ENCODE measurements at regions of chr2 and their contacts with region 1.

Region 1: GRCh38 chr2:223860809-223861738 is 23.7 kb upstream of the AP1S3 start:
- DNase-seq: peak; percentile 82
- ATAC-seq: peak; percentile 86
- H3K4me3 ChIP-seq: peak overlapping the region in 1 of 2 experiments; percentile 42; a peak in 2 of 4 replicates
- H3K27ac ChIP-seq: peak overlapping the region; percentile 92
- H3K4me1 ChIP-seq: peaks cover 50 to 62% of the 10 kb centered on the region in 2 experiments
- H3K27me3 ChIP-seq: no peaks in the 10 kb centered on the region
- CTCF ChIP-seq: peak; percentile 13 to 25 (median 14); a peak in 3 of 6 replicates
- POLR2A ChIP-seq: no peak
- RAD21 ChIP-seq: peak; percentile 41

Region 2: GRCh38 chr2:222976521-222977076 is 884.5 kb before region 1 on chr2:
- CTCF ChIA-PET with region 1: interaction called, 3 read pairs
- POLR2A ChIA-PET with region 1: no interaction called
- RAD21 ChIA-PET with region 1: no interaction called
- intact Hi-C with region 1: loop called (anchors 5 kb)
- DNase-seq: no peak
- ATAC-seq: no peak
- H3K4me3 ChIP-seq: no peak overlapping the region
- H3K27ac ChIP-seq: no peak overlapping the region
- H3K4me1 ChIP-seq: peaks cover 6 to 21% of the 10 kb centered on the region in 2 experiments; a peak in 2 of 4 replicates
- H3K27me3 ChIP-seq: no peaks in the 10 kb centered on the region
- CTCF ChIP-seq: no peak
- POLR2A ChIP-seq: no peak
- RAD21 ChIP-seq: no peak

Region 3: DNA sequence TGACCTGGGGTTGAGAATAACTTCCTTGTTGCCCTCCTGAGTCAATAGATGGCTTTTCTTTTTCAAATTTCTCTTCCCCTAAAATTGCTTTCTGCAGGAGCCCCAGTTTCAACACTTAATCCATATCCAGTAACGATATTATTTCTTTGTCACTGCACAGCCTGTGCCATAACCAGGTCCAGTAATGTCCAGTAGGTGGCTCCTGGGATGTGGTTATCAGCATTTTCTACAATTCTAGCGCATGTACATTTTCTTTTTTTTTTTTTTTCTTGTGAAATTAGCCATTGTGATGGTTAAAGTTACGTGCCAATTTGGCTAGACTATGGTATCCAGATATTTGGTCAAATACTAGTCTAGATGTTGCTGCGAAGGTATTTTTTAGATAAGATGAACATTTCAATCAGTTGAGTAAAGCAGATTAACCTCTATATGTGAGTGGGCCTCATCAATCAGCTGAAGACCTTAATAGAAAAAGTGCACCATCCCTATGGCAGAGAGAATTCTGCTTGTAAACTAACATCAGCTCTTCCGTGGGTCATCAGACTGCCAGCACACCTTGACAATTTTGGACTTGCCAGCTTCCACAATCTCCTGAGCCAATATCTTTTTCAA is 186.0 kb before region 1 on chr2:
- CTCF ChIA-PET with region 1: interaction called, 4 read pairs
- POLR2A ChIA-PET with region 1: no interaction called
- RAD21 ChIA-PET with region 1: interaction called in 1 of 2 experiments, 3 read pairs
- intact Hi-C with region 1: loop called (anchors 5 kb)
- DNase-seq: peak; percentile 54
- ATAC-seq: peak; percentile 87
- H3K4me3 ChIP-seq: no peak overlapping the region; a peak in 1 of 4 replicates
- H3K27ac ChIP-seq: peak overlapping the region; percentile 56
- H3K4me1 ChIP-seq: peaks cover 21 to 45% of the 10 kb centered on the region in 2 experiments
- H3K27me3 ChIP-seq: no peaks in the 10 kb centered on the region
- CTCF ChIP-seq: peak; percentile 73 to 86 (median 81)
- POLR2A ChIP-seq: no peak
- RAD21 ChIP-seq: peak; percentile 82

Region 4: DNA sequence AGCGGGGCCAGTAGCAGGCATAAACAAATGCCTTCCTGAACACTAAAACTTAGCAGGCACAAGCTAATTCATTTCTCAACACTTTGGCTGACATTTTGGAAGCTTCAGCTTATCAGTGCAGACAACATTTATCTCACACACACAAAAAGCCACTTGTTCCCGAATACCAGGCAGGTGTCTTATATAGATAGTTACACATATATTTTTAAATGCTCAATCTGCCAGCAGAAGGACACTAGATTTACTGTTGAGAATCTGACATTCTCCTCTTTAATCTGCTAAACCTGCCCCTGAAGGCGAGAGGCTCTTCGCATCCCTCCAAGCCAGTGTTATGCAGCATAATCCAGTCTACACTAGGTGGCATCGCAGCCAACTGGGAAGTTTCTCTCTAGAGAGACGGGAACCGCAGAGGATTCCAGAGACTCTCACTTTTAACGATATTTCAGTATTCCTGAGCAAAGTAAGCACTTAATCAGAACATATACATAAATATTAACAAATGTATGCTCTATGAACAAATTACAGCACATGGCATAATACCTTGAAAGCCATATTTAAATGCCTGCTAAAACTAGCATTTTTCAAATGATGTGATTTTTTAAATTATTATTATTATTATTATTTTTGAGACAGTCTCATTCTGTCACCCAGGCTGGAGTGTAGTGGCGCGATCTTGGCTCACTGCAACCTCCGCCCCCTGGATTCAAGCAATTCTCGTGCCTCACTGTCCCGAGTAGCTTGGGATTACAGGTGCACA is 168.7 kb before region 1 on chr2:
- CTCF ChIA-PET with region 1: no interaction called
- POLR2A ChIA-PET with region 1: no interaction called
- RAD21 ChIA-PET with region 1: interaction called in 1 of 2 experiments, 3 read pairs
- intact Hi-C with region 1: loop called (anchors 5 kb)
- DNase-seq: peak; percentile 59
- ATAC-seq: peak; percentile 85
- H3K4me3 ChIP-seq: no peak overlapping the region
- H3K27ac ChIP-seq: peak overlapping the region; percentile 4; the same call in 1 of the 2 replicates
- H3K4me1 ChIP-seq: peaks cover 34 to 51% of the 10 kb centered on the region in 2 experiments
- H3K27me3 ChIP-seq: no peaks in the 10 kb centered on the region
- CTCF ChIP-seq: peak; percentile 71 to 77 (median 72)
- POLR2A ChIP-seq: no peak
- RAD21 ChIP-seq: peak; percentile 86

Region 5: DNA sequence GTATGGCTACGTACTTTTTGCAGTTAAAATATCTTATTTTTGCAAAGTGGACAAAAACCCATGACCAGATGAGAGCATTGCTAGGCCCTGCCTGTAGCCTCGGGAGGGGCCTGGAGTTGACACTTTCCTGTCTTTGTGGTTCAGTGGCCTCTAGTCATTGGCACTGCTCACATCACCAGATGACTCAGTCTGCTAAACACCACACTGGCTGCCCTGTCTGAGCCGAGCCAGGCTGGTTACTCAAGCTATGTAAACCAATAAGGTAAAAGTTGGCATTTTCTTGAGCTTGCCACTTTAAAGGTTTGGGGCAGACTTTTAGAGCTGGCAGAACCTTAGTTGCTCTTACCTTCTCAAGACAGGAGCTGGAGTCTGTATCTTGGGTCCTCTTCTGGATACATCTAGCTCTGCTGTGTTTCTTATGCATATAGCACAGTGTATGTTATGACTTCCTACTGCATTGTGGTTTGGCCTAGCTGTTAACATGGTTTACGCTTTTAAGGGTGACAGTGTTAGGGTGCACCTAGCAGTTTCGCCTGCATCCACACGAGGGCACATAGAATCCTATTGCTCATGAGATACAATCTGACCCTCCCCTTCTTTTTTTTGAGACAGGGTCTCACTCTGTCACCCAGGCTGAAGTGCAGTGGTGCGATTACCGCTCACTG is 100.1 kb before region 1 on chr2:
- CTCF ChIA-PET with region 1: interaction called, 6 read pairs
- POLR2A ChIA-PET with region 1: interaction called, 3 read pairs
- RAD21 ChIA-PET with region 1: no interaction called
- intact Hi-C with region 1: loop called (anchors 2 kb)
- DNase-seq: peak; percentile 96
- ATAC-seq: peak; percentile 90
- H3K4me3 ChIP-seq: 0 out of 4 replicates have a peak overlapping the region, but pooled peaks of 1 of the 2 experiments have one; percentile 23
- H3K27ac ChIP-seq: peak overlapping the region; percentile 91
- H3K4me1 ChIP-seq: peaks cover 56 to 63% of the 10 kb centered on the region in 2 experiments
- H3K27me3 ChIP-seq: no peaks in the 10 kb centered on the region
- CTCF ChIP-seq: peak in 2 of 3 experiments; percentile 56 to 59; a peak in 4 of 6 replicates
- POLR2A ChIP-seq: no peak
- RAD21 ChIP-seq: peak; percentile 49

Region 6: DNA sequence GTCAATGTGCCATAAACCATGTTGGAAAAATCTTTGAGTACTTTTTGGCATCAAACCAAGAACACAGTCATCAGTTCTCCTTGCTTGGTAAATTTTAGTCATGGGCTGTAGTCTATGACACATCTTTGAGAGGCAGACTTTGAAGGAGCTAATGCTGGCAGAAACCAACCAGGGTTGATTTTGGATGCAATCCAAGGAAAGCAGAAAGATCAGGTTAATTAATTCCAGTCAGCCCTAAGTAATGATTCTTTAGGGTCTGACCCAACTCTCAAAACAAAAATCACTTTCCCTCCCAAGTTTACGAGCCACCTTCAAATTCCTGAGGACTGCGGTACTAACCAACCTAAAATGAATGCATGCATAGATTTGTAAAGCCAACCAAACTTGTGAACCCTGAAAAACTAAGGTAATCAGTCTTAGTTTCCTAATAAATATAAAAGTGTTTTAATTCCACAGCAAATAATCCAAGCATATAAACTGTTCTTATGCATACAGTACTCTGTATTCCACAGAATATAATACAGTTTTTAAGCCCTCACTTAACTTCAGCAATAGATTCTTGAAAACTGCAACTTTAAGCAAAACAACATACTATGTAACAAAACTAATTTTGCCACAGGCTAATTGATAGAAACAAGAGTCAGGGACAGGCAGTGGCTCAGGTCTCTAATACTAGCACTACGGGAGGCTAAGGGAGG is 45.7 kb before region 1 on chr2:
- CTCF ChIA-PET with region 1: interaction called, 4 read pairs
- POLR2A ChIA-PET with region 1: no interaction called
- RAD21 ChIA-PET with region 1: interaction called in 1 of 2 experiments, 4 read pairs
- intact Hi-C with region 1: loop called (anchors 1 kb)
- DNase-seq: peak; percentile 100
- ATAC-seq: peak; percentile 71
- H3K4me3 ChIP-seq: peak overlapping the region; percentile 20 to 37
- H3K27ac ChIP-seq: peak overlapping the region; percentile 99
- H3K4me1 ChIP-seq: peaks cover 85 to 92% of the 10 kb centered on the region in 2 experiments
- H3K27me3 ChIP-seq: no peaks in the 10 kb centered on the region
- CTCF ChIP-seq: no peak
- POLR2A ChIP-seq: no peak
- RAD21 ChIP-seq: peak; percentile 49